Activated naive CD4-positive, alpha-beta T cell treated with anti-CD3 and anti-CD28 coated beads for 36 hours (primary cell): ENCODE measurements at regions of chr1 and their contacts with region 1.

Region 1: DNA sequence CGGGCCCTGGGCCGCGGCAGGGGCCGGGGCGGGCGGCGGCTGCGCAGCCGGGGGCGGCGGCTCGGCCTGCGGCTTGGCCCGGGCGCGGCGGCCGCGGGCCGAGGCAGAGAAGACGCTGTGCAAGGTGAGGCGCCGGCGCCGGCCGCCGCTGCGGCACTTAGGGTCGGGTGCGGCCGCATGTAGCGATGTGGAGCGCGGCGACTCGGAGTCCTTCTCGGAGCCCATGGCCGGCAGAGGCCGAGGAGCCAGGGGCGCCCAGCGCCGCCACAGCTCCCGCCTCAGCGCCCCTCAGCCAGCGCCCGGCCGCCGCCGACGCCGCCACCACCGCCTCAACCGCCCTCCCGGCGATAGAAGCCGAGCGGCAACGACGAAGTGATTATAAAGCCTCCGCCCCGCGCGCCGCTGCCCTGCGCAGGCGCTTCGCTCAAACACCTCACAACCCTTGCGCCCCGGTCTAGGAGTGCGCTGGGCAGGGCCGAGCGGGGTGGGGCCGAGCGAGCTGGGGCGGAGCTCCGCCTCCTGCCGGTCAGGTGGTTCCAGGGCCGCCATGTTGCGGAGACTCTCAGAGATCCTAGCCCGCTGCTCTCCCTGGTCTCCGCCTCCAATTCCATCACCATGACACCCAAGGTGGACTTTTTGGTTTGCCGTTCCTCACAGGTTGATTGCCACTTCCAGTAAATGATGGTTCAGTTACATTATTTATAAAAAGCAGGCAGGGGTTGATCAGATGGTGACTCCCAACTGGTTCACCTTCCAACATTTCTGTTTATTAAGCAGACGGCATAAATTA is at the start of gene RNF19B:
- DNase-seq: peak; percentile 97
- H3K4me3 Mint-ChIP-seq: peak within 1 kb of the TSS; percentile 86
- H3K27ac Mint-ChIP-seq: peak within 1 kb of the TSS; percentile 82
- H3K4me1 Mint-ChIP-seq: peaks cover 48% of the 10 kb centered on the region
- H3K27me3 Mint-ChIP-seq: no peaks in the 10 kb centered on the region
- total RNA-seq, gene RNF19B: 12.5 to 13.3 TPM

Region 2: DNA sequence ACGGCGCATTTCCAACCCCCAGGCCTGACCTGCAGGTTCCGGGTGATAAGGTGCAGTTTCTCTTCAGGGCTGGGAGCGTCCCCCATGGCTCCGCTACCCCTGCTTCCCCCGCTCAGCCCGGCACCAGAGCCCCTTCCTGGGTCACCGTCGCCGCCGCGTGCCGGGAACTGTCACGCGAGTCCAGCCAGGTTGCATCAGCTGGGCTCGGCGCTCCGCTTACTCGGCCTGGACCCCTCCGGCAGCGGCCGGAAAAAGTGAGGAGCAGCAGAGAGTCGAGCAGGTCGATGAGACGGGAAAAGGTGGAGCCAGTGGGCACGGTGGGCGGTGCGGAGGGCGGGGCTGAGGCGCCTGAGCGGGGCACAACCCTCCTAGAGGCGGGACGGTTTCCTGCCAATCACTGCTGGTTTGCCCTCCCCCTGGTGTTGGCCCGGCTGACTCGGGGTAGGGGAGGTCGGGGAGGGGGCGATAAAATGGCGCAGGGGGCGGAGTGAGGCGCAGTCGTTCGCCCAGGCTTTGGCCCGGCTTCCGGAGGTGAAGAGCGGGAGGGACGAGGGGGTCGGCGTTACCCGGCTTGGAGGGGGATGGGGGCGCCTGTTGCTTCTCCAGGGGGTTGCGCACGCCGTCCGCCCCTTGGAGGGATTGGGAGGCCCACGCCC is 147.4 kb before region 1 on chr1 and contains the starts of genes S100PBP and YARS1:
- CTCF ChIA-PET with region 1: no interaction called
- intact Hi-C with region 1: loop called (anchors 2 kb)
- DNase-seq: peak; percentile 100
- H3K4me3 Mint-ChIP-seq: peak within 1 kb of the TSS; percentile 92
- H3K27ac Mint-ChIP-seq: peak within 1 kb of the TSS; percentile 94
- H3K4me1 Mint-ChIP-seq: peaks cover 51% of the 10 kb centered on the region
- H3K27me3 Mint-ChIP-seq: no peaks in the 10 kb centered on the region
- total RNA-seq, gene S100PBP: 26.1 to 31.2 TPM
- total RNA-seq, gene YARS1: 293 to 312 TPM

Region 3: DNA sequence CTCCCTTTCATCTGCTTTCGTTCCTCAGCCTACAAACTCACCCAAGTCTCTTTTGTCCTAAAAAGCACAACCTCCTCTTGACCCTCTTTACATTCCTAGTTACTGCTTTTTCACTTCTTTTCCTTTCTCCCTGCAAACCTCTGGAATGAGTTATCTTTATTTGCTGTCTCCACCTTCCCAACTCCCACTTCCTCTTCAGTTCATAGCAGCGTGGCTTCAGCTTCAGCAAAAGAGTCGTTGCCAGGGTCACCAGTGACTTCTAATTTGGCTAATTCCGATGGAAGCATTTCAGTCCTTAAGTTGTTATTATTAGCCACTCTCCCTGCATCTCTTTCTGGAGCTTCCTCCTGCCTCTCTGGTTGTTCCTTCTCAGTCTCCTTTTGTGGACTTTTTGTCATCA is 57.2 kb before region 1 on chr1:
- CTCF ChIA-PET with region 1: no interaction called
- intact Hi-C with region 1: no loop called
- DNase-seq: no peak
- H3K4me3 Mint-ChIP-seq: no peak overlapping the region
- H3K27ac Mint-ChIP-seq: no peak overlapping the region
- H3K4me1 Mint-ChIP-seq: no peaks in the 10 kb centered on the region
- H3K27me3 Mint-ChIP-seq: peaks cover 6% of the 10 kb centered on the region

Region 4: DNA sequence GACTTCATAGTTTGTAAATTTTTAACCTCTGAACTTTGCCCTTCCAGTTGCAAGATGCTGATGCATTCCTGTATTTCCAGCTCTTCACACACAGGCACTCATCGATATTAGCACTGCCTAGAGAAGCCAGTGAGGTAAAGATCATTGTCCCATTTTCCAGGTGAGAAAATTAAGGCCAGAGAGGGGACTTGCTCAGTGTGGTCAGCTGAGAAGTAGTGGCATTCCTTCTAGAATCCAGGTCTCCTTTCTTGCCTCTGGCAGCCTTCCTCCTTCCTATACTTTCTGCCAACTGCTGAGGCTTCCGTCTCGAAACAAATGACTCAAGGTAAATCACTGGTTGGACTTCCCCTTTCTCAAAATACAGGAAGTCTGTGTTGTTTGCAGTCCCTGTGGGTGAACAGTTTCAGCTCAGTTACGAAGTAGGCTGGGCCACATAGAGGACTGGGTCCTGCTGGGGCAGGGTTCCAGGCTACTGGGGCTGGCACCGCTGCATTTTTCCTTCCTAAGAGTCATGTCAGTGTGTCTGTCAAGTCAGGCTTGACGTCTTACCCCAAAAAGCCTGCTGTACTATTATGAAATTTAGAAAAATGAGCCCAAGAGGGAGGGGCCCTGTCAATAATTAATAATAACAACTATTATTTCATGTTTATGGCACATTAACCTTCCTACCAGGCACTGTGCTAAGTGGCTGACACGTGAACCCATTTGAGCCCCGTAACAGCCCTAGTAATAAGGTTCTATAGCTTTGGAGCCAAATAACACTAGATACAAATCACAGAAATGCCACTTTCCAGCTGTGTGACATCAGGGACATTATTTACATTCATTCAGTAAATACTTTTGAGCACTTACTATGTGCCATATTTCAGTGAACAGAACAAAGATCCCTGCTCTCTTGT is 16.6 kb after region 1 on chr1:
- CTCF ChIA-PET with region 1: interaction called, 4 read pairs
- intact Hi-C with region 1: loop called (anchors 1 kb)
- DNase-seq: peak; percentile 85
- H3K4me3 Mint-ChIP-seq: peak overlapping the region; percentile 30
- H3K27ac Mint-ChIP-seq: peak overlapping the region; percentile 91
- H3K4me1 Mint-ChIP-seq: peaks cover 44% of the 10 kb centered on the region
- H3K27me3 Mint-ChIP-seq: no peaks in the 10 kb centered on the region

Region 5: GRCh38 chr1:33007190-33008050 is 42.8 kb after region 1 on chr1:
- CTCF ChIA-PET with region 1: no interaction called
- intact Hi-C with region 1: loop called (anchors 2 kb)
- DNase-seq: peak; percentile 28
- H3K4me3 Mint-ChIP-seq: no peak overlapping the region
- H3K27ac Mint-ChIP-seq: peak overlapping the region; percentile 47
- H3K4me1 Mint-ChIP-seq: peaks cover 23% of the 10 kb centered on the region
- H3K27me3 Mint-ChIP-seq: no peaks in the 10 kb centered on the region

Region 6: GRCh38 chr1:33036526-33037503 is 72.2 kb after region 1 on chr1 and contains the start of gene AK2:
- CTCF ChIA-PET with region 1: no interaction called
- intact Hi-C with region 1: loop called (anchors 2 kb)
- DNase-seq: peak; percentile 96
- H3K4me3 Mint-ChIP-seq: peak within 1 kb of the TSS; percentile 92
- H3K27ac Mint-ChIP-seq: peak within 1 kb of the TSS; percentile 87
- H3K4me1 Mint-ChIP-seq: peaks cover 40% of the 10 kb centered on the region
- H3K27me3 Mint-ChIP-seq: no peaks in the 10 kb centered on the region
- total RNA-seq, gene AK2: 311 to 328 TPM

Region 7: DNA sequence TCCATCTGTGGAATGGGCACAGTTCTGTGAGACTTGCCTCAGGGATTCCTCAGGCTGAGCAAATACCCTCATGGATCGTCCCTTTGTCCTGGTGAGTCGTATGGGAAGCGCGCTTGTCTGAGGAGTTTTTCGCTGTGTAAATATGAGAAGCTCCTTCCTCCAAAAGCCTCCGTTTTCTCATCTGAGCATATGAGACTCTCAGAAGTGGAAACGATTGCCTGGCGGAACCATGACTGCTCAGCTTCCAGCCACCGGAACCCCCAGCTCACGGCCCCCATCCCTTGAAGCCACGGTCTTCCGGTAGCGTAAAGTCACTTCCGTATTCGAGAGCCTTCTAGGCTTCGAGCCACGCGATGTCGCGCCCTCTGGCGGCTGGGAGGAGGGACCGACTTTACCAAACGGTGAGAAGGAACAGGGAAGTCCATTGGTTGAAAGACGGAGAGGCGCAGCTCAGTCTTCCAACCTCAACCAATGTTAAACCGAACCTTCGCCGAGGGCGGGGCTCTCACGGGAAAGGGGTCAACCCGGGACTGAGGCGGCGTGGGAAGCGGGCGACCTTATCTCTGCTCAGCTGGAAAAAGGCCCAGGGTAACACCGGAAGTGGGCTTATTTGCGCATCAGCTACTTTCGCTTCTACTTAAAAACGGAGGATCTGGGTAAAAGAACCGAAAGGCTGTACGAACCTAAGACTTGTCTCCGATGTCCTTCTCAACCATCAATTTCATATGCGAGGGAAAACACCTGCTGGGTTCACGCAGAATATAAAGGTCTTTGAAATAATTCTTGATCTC is 162.5 kb after region 1 on chr1:
- CTCF ChIA-PET with region 1: interaction called, 3 read pairs
- intact Hi-C with region 1: loop called (anchors 1 kb)
- DNase-seq: peak; percentile 99
- H3K4me3 Mint-ChIP-seq: peak overlapping the region; percentile 94
- H3K27ac Mint-ChIP-seq: peak overlapping the region; percentile 91
- H3K4me1 Mint-ChIP-seq: peaks cover 39% of the 10 kb centered on the region
- H3K27me3 Mint-ChIP-seq: no peaks in the 10 kb centered on the region